GM10248 (cell line): ENCODE measurements at regions of chr13 and their contacts with region 1.

Region 1: GRCh38 chr13:98761126-98761985 is 8.9 kb upstream of the SLC15A1 start:
- DNase-seq: peak; percentile 49
- CTCF ChIP-seq: no peak

Region 2: DNA sequence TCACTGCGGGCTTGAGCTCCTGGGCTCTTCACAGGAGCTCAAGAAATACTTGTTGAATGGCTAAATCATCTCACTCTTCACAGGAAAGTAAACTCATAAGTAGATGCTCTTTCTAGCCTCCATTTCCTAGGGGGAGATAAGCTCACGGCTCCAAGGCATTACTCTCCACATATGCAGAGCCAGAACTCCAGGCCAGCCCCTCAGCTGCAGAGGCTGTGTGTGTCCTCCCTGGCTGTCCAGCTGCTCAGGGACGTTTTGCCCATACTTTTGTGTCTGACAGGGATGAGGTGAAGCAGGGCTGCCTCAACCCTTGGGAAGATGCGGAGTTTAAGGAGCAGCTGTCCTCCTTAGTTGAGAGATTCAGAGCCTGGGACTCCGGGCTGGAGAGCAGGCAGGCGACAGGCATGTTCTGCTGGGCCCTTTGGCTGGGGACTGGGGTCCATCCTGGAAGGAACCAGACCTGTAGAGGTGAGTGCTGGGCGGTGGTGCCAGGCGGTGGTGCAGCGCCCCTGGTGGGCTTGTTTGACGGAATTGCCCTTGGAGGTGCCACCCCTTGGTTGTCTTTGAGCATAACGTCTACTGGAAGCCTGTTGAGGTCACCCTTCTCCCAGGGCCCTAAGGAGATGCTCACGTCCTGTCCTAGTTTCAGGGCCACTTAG is 11.6 kb after region 1 on chr13:
- CTCF ChIA-PET with region 1: interaction called, 12 read pairs
- POLR2A ChIA-PET with region 1: no interaction called
- DNase-seq: no peak
- CTCF ChIP-seq: no peak

Region 3: DNA sequence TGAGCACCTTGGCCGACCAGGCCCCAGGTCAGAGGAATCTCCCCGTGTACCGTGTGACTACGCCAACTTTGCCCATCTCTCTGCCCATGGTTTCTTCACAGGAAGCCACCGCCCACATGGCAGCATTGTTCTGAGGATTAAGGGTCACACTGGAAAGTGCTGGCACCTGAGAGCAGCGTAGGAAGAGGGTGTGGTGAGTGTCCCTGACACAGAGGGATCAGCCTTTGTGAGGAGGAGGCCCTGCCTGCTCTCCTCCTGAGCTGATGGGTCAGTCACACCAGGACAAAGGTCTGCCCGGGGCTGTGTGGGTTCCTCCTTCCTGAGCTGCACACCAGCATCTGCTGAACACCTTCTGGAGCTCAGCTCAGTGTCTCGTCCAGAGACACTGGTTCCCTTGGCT is 23.3 kb after region 1 on chr13:
- CTCF ChIA-PET with region 1: no interaction called
- POLR2A ChIA-PET with region 1: no interaction called
- DNase-seq: no peak
- CTCF ChIP-seq: no peak